Right lobe of liver (tissue), 6 donors: ENCODE measurements at regions of chr20 and their contacts with region 1.

Region 1: DNA sequence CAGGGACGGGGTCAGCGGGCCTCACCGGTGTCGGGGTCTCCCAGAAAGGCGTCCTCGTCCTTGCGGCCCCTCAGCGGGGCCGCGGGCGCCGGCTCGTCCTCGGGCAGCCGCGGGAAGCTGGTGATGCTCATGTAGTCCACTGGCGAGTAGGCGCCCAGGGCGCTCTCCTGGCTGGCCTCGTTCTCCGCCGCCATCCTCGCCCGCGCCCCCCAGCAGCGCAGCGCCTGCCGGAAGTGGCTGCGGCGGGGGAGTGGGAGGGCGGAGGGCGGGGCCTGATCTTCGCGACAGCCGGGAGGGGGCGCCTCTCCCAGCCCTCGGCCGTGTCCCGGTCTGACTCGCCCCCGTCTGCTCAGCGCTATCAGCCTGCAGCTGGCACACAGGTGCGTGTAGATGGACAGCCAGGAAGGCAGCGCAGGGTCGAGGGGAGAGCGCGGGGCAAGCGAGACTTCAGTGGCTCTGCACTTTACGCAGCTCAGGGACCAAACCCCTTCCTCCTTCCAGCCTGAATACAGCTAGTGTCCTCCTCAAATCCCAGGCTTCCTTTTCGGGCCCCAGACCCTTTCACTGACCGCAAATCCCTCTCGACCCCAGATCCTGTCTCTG is at the start of gene GGT7:
- DNase-seq: peak; percentile 85 to 89 (median 88)
- ATAC-seq: peak; percentile 43 to 59 (median 53)
- H3K4me3 ChIP-seq: peak within 1 kb of the TSS; percentile 51 to 83 (median 82)
- H3K27ac ChIP-seq: no peak within 1 kb of the TSS
- H3K4me1 ChIP-seq: peaks cover 0 to 20% (median 8%) of the 10 kb centered on the region in 4 donors
- H3K27me3 ChIP-seq: no peaks in the 10 kb centered on the region
- CTCF ChIP-seq: peak; percentile 66 to 85 (median 82)
- POLR2A ChIP-seq: peak; percentile 28
- total RNA-seq, gene GGT7: 4.8 to 13.3 (median 9.4) TPM

Region 2: DNA sequence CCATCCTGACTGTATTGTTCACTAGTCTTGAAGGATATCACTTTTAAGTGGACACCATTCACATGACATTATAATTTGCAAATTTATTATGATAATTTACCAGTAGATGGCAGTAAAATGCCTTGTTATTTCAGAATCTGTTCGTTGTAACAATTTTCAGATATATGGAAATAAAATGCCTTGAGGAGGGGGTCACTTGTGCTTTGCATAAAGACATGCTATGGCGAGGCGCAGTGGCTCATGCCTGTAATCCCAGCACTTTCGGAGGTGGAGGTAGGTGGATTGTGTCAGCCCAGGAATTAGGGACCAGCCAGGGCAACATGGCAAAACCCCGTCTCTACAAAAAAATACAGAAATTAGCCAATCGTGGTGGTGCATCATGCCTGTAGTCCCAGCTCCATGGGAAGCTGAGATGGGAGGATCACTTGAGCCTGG is 38.2 kb before region 1 on chr20:
- intact Hi-C with region 1: loop called in 1 of 2 experiments (anchors 5 kb)
- DNase-seq: no peak
- ATAC-seq: peak; percentile 37 to 71 (median 57)
- H3K4me3 ChIP-seq: no peak overlapping the region
- H3K27ac ChIP-seq: no peak overlapping the region
- H3K4me1 ChIP-seq: no peaks in the 10 kb centered on the region
- H3K27me3 ChIP-seq: no peaks in the 10 kb centered on the region
- CTCF ChIP-seq: peak; percentile 34 to 54 (median 45)
- POLR2A ChIP-seq: no peak

Region 3: DNA sequence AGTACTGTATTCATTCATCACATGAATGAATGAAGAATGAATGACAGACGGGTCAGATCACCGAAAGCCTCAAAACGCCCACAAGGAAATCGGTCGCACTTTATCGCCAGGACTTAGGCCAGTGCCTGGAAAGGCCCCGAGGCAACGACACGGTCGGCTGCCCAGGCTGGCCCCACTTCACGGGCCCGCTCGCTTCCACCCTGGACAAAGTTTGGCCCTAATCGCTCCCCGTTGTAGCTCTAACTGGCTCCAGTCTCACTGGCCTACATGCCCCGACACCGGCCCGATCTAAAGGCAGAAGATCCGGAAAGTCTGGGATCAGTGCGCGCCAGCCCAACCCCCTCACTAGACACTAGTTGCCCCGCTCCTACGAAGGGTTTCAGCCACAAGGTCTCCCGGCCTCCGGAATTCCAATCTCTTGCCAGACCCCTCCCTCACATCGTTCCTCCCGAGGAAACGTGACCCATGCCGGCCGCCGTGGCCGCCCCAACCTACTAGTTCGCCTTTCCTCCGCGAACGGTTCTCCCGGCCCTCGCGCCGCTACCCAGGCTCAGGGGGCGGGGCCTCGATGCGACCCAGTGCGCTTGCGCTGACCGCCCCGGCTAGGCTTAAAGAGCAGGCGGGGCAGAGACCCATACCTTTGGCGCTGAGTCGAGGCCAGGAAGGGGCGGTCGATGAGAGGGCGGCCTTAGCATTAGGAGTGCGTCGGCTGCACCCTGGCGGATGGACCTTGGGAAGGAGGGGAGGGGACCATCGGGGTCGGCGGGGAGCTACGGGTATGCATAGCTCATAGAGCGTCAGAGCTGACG is 82.7 kb after region 1 on chr20 and contains the starts of genes GSS and MYH7B:
- intact Hi-C with region 1: loop called (anchors 5 kb)
- DNase-seq: peak; percentile 98 to 99 (median 99)
- ATAC-seq: peak; percentile 94 to 97 (median 96)
- H3K4me3 ChIP-seq: peak within 1 kb of the TSS; percentile 63 to 71 (median 66)
- H3K27ac ChIP-seq: peak within 1 kb of the TSS; percentile 79 to 90 (median 88)
- H3K4me1 ChIP-seq: peaks cover 0 to 13% (median 2%) of the 10 kb centered on the region in 4 donors
- H3K27me3 ChIP-seq: no peaks in the 10 kb centered on the region
- CTCF ChIP-seq: peak; percentile 54 to 64 (median 56)
- POLR2A ChIP-seq: peak; percentile 84
- total RNA-seq, gene GSS: 25.9 to 63.6 (median 31.7) TPM
- total RNA-seq, gene MYH7B: 0.11 to 1.0 (median 0.39) TPM in 5 of 6 experiments, not detected in the other